AG04450 (cell line): ENCODE measurements at regions of chr1 and their contacts with region 1.

Region 1: DNA sequence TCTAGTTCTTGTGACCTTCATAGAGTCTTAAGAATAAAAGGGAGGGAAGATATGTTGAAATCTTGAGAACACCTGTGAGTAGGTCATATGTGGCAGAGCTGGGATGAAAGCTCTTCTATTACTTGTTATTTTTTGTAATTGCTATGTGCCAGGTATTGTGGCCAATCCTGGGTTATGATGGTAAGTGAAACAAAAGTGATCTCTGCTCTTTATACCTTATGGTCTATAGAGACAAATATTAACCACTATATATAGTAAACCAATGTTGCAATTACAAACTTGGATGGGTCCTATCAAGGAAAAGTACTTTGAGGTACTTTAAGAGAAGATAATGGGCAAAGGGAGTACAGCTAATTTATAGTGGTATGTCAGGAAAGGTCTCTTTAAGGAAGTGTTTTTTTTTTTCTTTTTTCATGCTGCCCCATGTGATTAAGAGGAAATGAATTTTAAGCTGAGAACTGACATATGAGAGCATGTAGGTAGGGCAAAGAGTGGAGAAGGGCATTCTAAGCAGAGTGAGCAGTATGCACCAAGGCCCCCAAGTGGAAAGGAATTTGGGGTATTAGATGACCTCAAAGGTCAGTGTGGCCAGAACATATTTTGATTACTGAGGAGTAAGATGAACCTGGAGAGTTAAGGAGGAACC is 43.3 kb downstream of the POU2F1 start:
- DNase-seq: no peak
- H3K4me3 ChIP-seq: no peak overlapping the region
- H3K27ac ChIP-seq: no peak overlapping the region
- H3K27me3 ChIP-seq: no peaks in the 10 kb centered on the region
- CTCF ChIP-seq: no peak

Region 2: GRCh38 chr1:167076136-167076710 is 187.7 kb before region 1 on chr1:
- CTCF ChIA-PET with region 1: no interaction called
- POLR2A ChIA-PET with region 1: no interaction called
- DNase-seq: no peak
- H3K4me3 ChIP-seq: no peak overlapping the region
- H3K27ac ChIP-seq: no peak overlapping the region
- H3K27me3 ChIP-seq: no peaks in the 10 kb centered on the region
- CTCF ChIP-seq: no peak

Region 3: DNA sequence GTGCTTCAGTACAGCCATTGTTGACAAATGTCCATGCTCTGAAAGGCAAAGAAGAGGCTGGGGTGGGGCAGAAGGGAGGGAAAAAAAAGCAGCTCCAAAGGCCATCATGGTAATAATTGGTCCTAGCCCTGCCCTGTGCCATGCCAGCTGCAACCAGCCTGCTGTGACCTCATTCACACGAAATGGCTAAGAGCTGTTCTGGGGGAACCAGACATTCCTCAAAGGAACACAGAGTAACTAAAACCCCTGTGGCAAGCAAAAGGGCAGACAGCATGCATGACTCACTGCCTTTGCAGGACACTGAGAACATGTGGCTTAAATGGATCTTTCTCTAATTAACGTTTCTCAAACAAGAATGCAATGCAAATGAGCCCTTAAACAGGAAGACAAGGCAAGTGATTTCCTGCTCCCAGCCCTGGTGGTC is 127.7 kb before region 1 on chr1:
- CTCF ChIA-PET with region 1: no interaction called
- POLR2A ChIA-PET with region 1: no interaction called
- DNase-seq: no peak
- H3K4me3 ChIP-seq: no peak overlapping the region
- H3K27ac ChIP-seq: no peak overlapping the region
- H3K27me3 ChIP-seq: no peaks in the 10 kb centered on the region
- CTCF ChIP-seq: no peak

Region 4: GRCh38 chr1:167291539-167292185 is 27.7 kb after region 1 on chr1:
- CTCF ChIA-PET with region 1: interaction called, 12 read pairs
- POLR2A ChIA-PET with region 1: no interaction called
- DNase-seq: no peak
- H3K4me3 ChIP-seq: no peak overlapping the region
- H3K27ac ChIP-seq: no peak overlapping the region
- H3K27me3 ChIP-seq: no peaks in the 10 kb centered on the region
- CTCF ChIP-seq: no peak

Region 5: GRCh38 chr1:167364826-167365225 is 100.9 kb after region 1 on chr1:
- CTCF ChIA-PET with region 1: interaction called, 13 read pairs
- POLR2A ChIA-PET with region 1: no interaction called
- DNase-seq: no peak
- H3K4me3 ChIP-seq: no peak overlapping the region
- H3K27ac ChIP-seq: no peak overlapping the region
- H3K27me3 ChIP-seq: no peaks in the 10 kb centered on the region
- CTCF ChIP-seq: no peak

Region 6: GRCh38 chr1:167474191-167474716 is 210.3 kb after region 1 on chr1:
- CTCF ChIA-PET with region 1: interaction called, 11 read pairs
- POLR2A ChIA-PET with region 1: no interaction called
- DNase-seq: no peak
- H3K4me3 ChIP-seq: no peak overlapping the region
- H3K27ac ChIP-seq: no peak overlapping the region
- H3K27me3 ChIP-seq: peaks cover 4% of the 10 kb centered on the region
- CTCF ChIP-seq: no peak